ENCODE measurements at regions of chr19 and their contacts with region 1.

Region 1: DNA sequence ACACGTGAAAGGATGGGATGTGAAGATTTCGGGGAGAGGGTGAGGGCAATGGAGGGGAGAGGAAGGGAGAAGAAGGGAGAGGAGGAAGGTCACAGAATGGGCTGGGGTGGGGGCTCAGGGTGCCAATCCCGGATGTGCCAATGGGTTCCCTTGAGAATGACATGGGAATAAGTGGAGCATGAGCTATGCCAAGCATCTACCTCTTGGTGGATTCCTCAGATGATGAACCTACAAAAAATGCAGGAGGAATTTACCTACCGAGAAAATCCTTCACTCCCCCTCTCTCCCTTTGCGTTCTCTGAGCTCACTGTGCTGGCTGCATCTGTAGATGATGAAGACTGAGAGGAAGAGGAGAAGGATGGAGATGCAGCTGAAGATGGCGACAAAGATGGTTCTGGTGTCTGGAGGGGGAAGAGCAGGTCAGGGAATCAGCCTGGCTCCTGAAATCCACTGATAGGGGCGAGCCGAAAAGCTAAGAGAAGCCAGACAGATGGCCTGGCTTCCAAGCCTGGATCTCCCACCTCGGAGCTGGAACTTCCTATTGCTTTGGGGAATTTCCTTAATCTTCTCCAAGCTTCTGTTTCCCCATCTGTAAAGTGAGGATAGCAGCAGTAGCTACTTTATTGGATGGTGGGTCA is 21.6 kb downstream of the VSTM1 start:
- DNase-seq: no peak
- CTCF ChIP-seq: no peak

Region 2: GRCh38 chr19:53594811-53595509 is 447.1 kb before region 1 on chr19:
- CTCF ChIA-PET with region 1: no interaction called
- POLR2A ChIA-PET with region 1: no interaction called
- DNase-seq: no peak
- CTCF ChIP-seq: no peak

Region 3: GRCh38 chr19:54023191-54023590 is 18.9 kb before region 1 on chr19:
- CTCF ChIA-PET with region 1: interaction called, 16 read pairs
- POLR2A ChIA-PET with region 1: no interaction called
- DNase-seq: no peak
- CTCF ChIP-seq: no peak

Region 4: GRCh38 chr19:54029930-54030490 is 12.1 kb before region 1 on chr19:
- CTCF ChIA-PET with region 1: interaction called, 16 read pairs
- POLR2A ChIA-PET with region 1: no interaction called
- DNase-seq: peak; percentile 41
- CTCF ChIP-seq: peak; percentile 49

Region 5: GRCh38 chr19:54062643-54063042 is 20.6 kb after region 1 on chr19:
- CTCF ChIA-PET with region 1: no interaction called
- POLR2A ChIA-PET with region 1: no interaction called
- DNase-seq: no peak
- CTCF ChIP-seq: no peak